Mammary epithelial cell (primary cell): ENCODE measurements at regions of chr4 and their contacts with region 1.

Region 1: GRCh38 chr4:80365928-80366327 is 30.4 kb downstream of the CFAP299 start:
- DNase-seq: peak; percentile 64
- H3K4me3 ChIP-seq: no peak overlapping the region
- H3K27ac ChIP-seq: no peak overlapping the region
- H3K4me1 ChIP-seq: no peaks in the 10 kb centered on the region
- H3K27me3 ChIP-seq: no peaks in the 10 kb centered on the region
- CTCF ChIP-seq: peak; percentile 81 to 93

Region 2: DNA sequence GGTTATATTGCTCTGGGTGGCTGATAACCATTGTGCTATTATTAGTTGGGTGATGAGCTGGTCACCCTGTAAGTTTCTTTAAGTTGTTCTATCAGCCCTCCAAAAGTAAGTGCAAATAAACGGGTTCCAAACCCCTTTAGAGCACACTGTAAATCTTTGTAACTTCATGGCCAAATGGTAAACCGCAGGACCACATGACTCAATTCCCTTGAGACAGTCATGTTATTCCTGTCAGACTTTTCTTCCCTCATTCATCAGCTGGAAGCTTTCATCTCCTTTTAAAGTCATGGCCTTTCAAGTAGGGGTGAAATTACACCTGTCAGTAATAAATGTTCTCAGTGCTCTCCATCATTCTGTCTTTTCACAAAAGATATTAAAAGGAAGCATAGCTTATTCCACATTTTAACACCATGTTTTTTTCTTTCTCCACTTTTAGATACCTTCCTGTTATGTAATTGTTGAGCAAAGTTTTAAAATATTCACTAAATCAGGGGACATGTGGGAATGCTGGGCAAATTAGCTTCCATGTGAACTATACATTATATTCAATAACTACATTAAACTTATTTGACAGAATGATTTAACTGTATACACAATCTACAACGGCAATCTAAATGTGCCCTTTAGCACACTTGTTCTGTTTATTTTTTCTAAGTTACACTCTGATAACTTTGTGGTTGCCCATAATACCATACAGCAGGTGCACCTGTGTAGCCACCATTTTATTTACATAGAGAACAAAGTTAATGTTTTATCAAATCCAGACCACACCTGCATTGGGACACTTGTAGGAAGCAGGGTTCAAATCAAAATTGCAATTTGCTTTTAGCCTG is 245.1 kb after region 1 on chr4:
- CTCF ChIA-PET with region 1: no interaction called
- dilution Hi-C with region 1: no loop called
- in situ Hi-C with region 1: loop called in 1 of 2 experiments (anchors 10 kb)
- intact Hi-C with region 1: no loop called
- DNase-seq: peak; percentile 37
- H3K4me3 ChIP-seq: no peak overlapping the region
- H3K27ac ChIP-seq: no peak overlapping the region
- H3K4me1 ChIP-seq: no peaks in the 10 kb centered on the region
- H3K27me3 ChIP-seq: peaks cover 2% of the 10 kb centered on the region
- CTCF ChIP-seq: no peak

Region 3: DNA sequence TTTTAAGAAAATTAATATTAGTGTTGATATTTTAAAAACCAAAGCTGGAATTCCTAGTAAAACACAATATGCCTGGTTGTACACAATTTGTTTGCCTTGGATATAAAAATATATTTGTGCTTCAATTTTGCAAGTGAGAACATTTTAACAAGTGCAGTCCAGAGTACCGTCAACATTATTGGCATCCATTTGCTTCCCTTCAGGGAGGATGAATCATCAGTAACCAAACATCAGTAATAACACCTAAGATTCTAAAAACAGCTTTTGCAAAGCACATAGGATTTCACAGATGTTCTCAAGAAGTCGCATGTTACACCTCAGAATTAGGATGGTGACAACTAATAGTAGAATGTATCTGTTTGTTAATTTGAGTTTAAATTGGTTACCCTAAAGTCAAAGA is 402.0 kb after region 1 on chr4:
- CTCF ChIA-PET with region 1: no interaction called
- dilution Hi-C with region 1: no loop called
- in situ Hi-C with region 1: no loop called
- intact Hi-C with region 1: loop called (anchors 10 kb)
- DNase-seq: peak; percentile 24
- H3K4me3 ChIP-seq: no peak overlapping the region
- H3K27ac ChIP-seq: no peak overlapping the region
- H3K4me1 ChIP-seq: no peaks in the 10 kb centered on the region
- H3K27me3 ChIP-seq: peaks cover 2% of the 10 kb centered on the region
- CTCF ChIP-seq: no peak

Region 4: DNA sequence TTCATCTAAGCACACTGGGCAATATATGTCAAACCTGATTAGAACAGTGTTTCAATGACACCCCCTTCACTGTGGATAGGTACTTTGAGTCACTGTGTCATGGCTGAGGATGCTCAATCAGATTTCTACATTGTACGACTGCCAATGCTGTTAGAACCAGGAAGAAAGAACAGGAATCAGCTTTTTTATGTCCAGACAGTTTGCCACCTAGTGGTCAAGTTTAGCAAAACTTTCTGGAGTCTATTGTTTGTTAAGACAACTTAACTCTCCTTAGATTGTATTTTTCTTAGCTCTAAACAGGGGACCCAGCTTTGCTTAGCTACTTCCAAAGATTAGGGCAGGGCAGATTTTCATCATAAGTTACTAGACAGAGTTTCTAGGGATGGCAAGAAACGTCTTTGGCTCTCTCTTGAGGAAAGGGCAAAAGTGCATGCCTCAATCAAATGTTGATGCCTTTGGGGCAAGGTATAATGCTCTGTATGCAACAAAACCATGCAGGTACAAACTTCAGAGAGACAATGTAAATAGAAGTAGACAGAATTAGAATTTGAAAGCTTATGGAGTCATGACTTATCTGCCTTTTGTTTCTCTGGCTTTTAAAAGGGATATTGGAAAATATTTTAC is 624.1 kb after region 1 on chr4:
- CTCF ChIA-PET with region 1: no interaction called
- dilution Hi-C with region 1: no loop called
- in situ Hi-C with region 1: no loop called
- intact Hi-C with region 1: loop called (anchors 1 kb)
- DNase-seq: peak; percentile 39
- H3K4me3 ChIP-seq: no peak overlapping the region
- H3K27ac ChIP-seq: no peak overlapping the region
- H3K4me1 ChIP-seq: no peaks in the 10 kb centered on the region
- H3K27me3 ChIP-seq: no peaks in the 10 kb centered on the region
- CTCF ChIP-seq: peak; percentile 63 to 68

Region 5: DNA sequence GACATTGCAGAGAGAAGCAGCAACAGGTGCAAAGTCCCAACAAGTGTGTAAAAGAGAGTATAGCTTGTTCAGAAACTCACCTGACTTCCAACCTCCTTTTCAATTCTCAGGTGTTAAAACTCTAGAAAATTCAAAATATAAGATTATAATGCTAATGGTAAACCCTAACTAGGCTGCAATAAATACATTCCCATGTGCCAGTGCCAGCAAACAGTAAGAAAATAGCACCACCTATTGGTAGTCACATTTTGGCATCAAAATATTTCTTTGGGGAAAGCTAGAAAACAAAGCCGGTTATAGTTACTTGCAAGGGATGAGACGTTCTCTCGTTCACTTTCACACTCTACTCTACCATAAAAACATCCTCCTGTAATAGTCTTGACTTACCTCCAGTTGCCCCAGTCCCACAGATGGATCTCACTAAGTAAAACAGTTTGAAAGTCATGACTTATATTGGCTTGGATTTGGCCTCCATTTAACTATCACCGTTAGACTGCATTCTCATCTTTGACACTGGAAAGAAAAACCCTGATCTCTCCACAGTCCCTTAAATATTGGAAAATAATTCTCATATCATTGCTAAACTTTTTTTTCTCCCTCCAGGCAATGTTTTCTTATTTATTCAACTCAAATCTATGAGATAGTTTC is 674.2 kb after region 1 on chr4:
- CTCF ChIA-PET with region 1: interaction called, 3 read pairs
- dilution Hi-C with region 1: loop called (anchors 25 kb)
- in situ Hi-C with region 1: loop called (anchors 5 to 10 kb)
- intact Hi-C with region 1: loop called (anchors 1 kb)
- DNase-seq: peak; percentile 16
- H3K4me3 ChIP-seq: no peak overlapping the region
- H3K27ac ChIP-seq: no peak overlapping the region
- H3K4me1 ChIP-seq: peaks cover 3% of the 10 kb centered on the region
- H3K27me3 ChIP-seq: peaks cover 6% of the 10 kb centered on the region
- CTCF ChIP-seq: peak; percentile 72 to 78

Region 6: GRCh38 chr4:81351654-81352445 is 985.9 kb after region 1 on chr4:
- CTCF ChIA-PET with region 1: no interaction called
- dilution Hi-C with region 1: no loop called
- in situ Hi-C with region 1: loop called (anchors 25 kb)
- intact Hi-C with region 1: loop called (anchors 5 kb)
- DNase-seq: peak; percentile 39
- H3K4me3 ChIP-seq: no peak overlapping the region
- H3K27ac ChIP-seq: no peak overlapping the region
- H3K4me1 ChIP-seq: no peaks in the 10 kb centered on the region
- H3K27me3 ChIP-seq: no peaks in the 10 kb centered on the region
- CTCF ChIP-seq: peak; percentile 90 to 96